Left ventricle myocardium superior (tissue), 1 donor: ENCODE measurements at regions of chr11 and their contacts with region 1.

Region 1: GRCh38 chr11:30917859-30918478 is 331.8 kb upstream of the MPPED2 start:
- DNase-seq: no peak
- ATAC-seq: peak; percentile 30

Region 2: DNA sequence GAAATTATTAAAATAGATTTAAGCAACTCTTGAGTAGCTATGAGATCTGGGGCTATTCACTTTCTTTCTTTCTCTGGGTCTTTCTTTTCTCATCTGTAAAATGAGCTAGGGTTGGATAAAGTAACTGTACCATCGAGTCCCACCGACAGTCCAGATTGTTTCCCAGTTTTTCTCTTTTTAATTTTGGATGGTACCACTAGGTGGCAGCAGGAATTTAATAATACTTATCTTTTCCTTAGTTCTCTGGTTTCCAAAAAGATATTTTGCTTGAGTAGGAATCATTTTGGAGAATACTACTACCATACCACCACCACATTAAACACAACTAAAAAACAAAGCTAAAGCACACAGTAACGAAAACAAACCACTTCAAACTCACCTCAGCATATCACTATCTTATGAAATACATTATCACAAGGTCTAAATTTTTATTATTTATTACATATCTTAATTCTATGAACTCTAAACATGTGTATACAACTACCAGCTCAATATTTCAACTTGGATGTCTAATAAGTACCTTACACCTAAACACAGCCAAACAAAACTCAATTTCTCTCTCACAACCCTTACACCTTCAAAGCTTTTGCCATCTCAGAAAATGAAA is 1485.1 kb before region 1 on chr11:
- intact Hi-C with region 1: loop called (anchors 10 kb)
- DNase-seq: no peak
- ATAC-seq: no peak

Region 3: GRCh38 chr11:30346068-30346688 is 571.8 kb before region 1 on chr11:
- intact Hi-C with region 1: loop called (anchors 10 kb)
- DNase-seq: no peak
- ATAC-seq: peak; percentile 52

Region 4: GRCh38 chr11:30967579-30967978 is 49.6 kb after region 1 on chr11:
- intact Hi-C with region 1: no loop called
- DNase-seq: no peak
- ATAC-seq: no peak

Region 5: GRCh38 chr11:31246451-31247165 is 328.6 kb after region 1 on chr11:
- intact Hi-C with region 1: no loop called
- DNase-seq: no peak
- ATAC-seq: peak; percentile 96